ENCODE measurements at regions of chr6 and their contacts with region 1.

Region 1: DNA sequence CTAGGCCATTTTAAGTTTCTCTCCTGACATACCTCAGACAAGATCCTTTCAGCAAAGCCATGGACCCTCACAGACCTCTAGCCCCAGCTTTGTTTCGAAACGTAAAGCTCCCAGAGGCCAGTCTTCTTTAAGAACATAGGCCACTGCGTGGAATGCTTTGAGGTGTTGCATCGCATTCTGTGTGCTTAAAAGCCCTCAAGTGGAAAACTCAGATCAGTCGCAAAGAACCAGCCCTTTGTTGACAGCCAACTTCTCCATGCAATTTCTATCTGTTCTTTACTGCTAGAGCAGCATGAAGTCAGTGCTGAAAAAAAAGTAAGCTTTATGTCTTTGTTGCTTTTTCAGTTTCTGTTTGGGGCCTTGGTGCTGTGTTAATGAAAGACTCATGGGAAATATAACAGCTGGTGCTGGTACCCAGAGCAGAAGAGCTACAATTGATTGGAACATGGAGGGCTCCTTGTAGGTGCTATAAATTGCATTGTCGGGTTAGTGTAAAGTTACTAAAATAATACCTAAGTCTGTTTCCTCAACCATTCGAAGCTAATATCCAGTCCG is 142.6 kb downstream of the MAP3K7 start:
- DNase-seq: no peak
- ATAC-seq: no peak
- H3K4me3 Mint-ChIP-seq: no peak overlapping the region
- H3K27ac Mint-ChIP-seq: no peak overlapping the region
- H3K4me1 Mint-ChIP-seq: peaks cover 25% of the 10 kb centered on the region
- H3K27me3 Mint-ChIP-seq: no peaks in the 10 kb centered on the region

Region 2: GRCh38 chr6:90434094-90434493 is 10.1 kb before region 1 on chr6:
- CTCF ChIA-PET with region 1: interaction called, 10 read pairs
- POLR2A ChIA-PET with region 1: no interaction called
- DNase-seq: no peak
- ATAC-seq: no peak
- H3K4me3 Mint-ChIP-seq: no peak overlapping the region
- H3K27ac Mint-ChIP-seq: no peak overlapping the region
- H3K4me1 Mint-ChIP-seq: peaks cover 2% of the 10 kb centered on the region
- H3K27me3 Mint-ChIP-seq: no peaks in the 10 kb centered on the region

Measured in activated CD8-positive, alpha-beta T cell treated with anti-CD3 and anti-CD28 coated beads, Interleukin-2, amount 10 ng/mL, durations not matched to agents 7 days and 5 days (primary cell).